AG04450 (cell line): ENCODE measurements at regions of chr1 and their contacts with region 1.

Region 1: GRCh38 chr1:109201123-109201703 is 12.5 kb upstream of the SARS1 start:
- DNase-seq: peak; percentile 81
- H3K4me3 ChIP-seq: no peak overlapping the region
- H3K27ac ChIP-seq: peak overlapping the region; percentile 11
- H3K27me3 ChIP-seq: no peaks in the 10 kb centered on the region
- CTCF ChIP-seq: peak; percentile 82

Region 2: GRCh38 chr1:109213785-109214468 is 12.7 kb after region 1 on chr1 and contains the start of gene SARS1:
- CTCF ChIA-PET with region 1: interaction called, 30 read pairs
- POLR2A ChIA-PET with region 1: interaction called, 8 read pairs
- DNase-seq: peak; percentile 63
- H3K4me3 ChIP-seq: peak within 1 kb of the TSS; percentile 98
- H3K27ac ChIP-seq: peak within 1 kb of the TSS; percentile 93
- H3K27me3 ChIP-seq: no peaks in the 10 kb centered on the region
- CTCF ChIP-seq: no peak
- polyA plus RNA-seq, gene SARS1: 301 and 332 TPM in 2 replicates